Dorsolateral prefrontal cortex (tissue), 120 donors: ENCODE measurements at regions of chr9 and their contacts with region 1.

Region 1: DNA sequence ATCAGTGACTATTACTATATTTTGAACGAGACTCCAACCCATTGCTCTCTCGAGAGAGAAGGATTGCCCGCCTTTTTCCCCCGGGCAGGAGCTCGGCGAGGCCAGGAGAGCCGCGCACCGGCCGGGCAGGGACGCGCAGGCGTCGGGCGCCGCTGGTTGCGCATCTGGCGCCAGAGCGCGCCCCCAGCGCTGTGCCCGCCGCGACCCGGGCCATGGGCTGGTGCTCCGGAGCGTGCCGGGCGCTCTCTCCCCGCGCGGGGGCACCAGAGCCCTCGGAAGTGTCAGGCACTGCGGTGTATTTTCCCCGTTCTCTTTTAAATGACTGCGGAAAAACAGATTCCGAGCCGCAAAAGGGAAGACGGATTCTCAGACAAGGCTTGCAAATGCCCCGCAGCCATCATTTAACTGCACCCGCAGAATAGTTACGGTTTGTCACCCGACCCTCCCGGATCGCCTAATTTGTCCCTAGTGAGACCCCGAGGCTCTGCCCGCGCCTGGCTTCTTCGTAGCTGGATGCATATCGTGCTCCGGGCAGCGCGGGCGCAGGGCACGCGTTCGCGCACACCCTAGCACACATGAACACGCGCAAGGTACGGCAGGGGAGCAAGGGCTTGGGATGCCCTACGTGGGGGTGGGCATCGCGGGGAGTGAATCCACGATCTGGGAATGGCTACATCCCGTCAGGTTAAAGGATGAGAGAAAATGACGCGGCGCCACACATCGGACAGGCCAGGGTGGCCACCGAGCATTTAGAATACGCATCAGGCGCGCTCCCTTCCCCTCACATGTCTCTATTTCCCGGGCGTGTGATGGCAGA is 1.1 kb upstream of the NTRK2 start:
- DNase-seq: peak; percentile 74 to 90 (median 86)
- H3K4me3 ChIP-seq: peak overlapping the region; percentile 65 to 90 (median 81)
- H3K27ac ChIP-seq: peak overlapping the region; percentile 82 to 99 (median 97)
- H3K27me3 ChIP-seq: no peaks in the 10 kb centered on the region
- CTCF ChIP-seq: peak; percentile 55 to 91 (median 75)

Region 2: DNA sequence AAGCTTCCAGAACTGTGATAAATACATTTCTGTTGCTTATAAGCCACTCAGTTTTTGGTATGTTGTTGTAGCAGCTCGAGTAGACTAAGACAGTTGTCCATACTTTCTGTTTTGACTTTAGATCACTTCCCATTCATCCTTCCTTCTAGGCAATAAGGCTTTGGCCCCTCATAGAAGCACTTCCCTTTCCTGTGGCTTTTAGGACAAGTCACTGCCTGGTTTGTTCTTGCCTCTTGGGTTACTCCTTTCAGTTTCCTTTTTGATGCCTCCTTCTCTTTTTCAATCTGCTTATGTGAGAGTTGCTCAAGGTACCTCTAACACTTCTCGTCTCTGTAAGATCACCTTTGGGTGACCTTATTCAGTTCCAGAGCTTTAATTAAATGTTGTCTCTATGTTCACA is 71.3 kb before region 1 on chr9:
- intact Hi-C with region 1: no loop called
- DNase-seq: no peak
- H3K4me3 ChIP-seq: no peak overlapping the region
- H3K27ac ChIP-seq: no peak overlapping the region
- H3K27me3 ChIP-seq: no peaks in the 10 kb centered on the region
- CTCF ChIP-seq: no peak

Region 3: GRCh38 chr9:84953797-84954705 is 285.6 kb after region 1 on chr9:
- intact Hi-C with region 1: loop called in 1 of 2 experiments (anchors 5 kb)
- DNase-seq: peak; percentile 75 to 91 (median 86)
- H3K4me3 ChIP-seq: peak overlapping the region in 26 of 59 donors; percentile 1 to 50 (median 25)
- H3K27ac ChIP-seq: peak overlapping the region in 55 of 59 donors; percentile 6 to 88 (median 60)
- H3K27me3 ChIP-seq: no peaks in the 10 kb centered on the region
- CTCF ChIP-seq: peak; percentile 73 to 99 (median 96)

Region 4: DNA sequence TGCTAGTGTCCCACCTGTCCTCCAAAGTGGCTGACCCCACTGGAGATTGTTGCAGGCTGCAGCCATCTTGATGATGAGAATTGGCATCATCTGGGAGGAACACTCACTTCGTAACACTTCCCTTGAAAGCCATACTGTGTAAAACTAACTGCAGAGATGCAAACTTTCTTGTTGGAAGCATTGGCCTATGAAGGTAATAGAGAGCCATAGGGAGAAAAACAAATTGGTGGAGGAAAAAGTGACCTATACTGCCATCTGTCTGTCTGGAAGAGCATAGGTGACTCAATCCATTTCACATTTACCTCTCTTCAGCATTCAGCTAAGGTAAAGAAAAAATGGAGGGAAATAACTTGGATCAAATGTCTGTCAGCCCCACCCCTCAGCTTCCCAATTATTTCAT is 474.6 kb after region 1 on chr9:
- intact Hi-C with region 1: loop called (anchors 10 kb)
- DNase-seq: no peak
- H3K4me3 ChIP-seq: no peak overlapping the region
- H3K27ac ChIP-seq: peak overlapping the region in 8 of 59 donors; percentile 2 to 55 (median 31)
- H3K27me3 ChIP-seq: no peaks in the 10 kb centered on the region
- CTCF ChIP-seq: peak; percentile 31 to 79 (median 63)

Region 5: GRCh38 chr9:85610074-85610860 is 941.9 kb after region 1 on chr9:
- intact Hi-C with region 1: loop called (anchors 2 to 10 kb)
- DNase-seq: peak in 2 of 10 donors; percentile 44 to 45
- H3K4me3 ChIP-seq: peak overlapping the region in 54 of 59 donors; percentile 4 to 55 (median 39)
- H3K27ac ChIP-seq: peak overlapping the region; percentile 61 to 98 (median 93)
- H3K27me3 ChIP-seq: no peaks in the 10 kb centered on the region
- CTCF ChIP-seq: peak; percentile 67 to 96 (median 87)